CD4-positive, alpha-beta memory T cell (primary cell): ENCODE measurements at regions of chr16 and their contacts with region 1.

Region 1: GRCh38 chr16:8878521-8878911 is 3.6 kb upstream of the LITAFD start:
- DNase-seq: no peak
- H3K4me3 ChIP-seq: no peak overlapping the region
- H3K4me3 Mint-ChIP-seq: no peak overlapping the region
- H3K27ac ChIP-seq: no peak overlapping the region
- H3K27ac Mint-ChIP-seq: no peak overlapping the region
- H3K4me1 ChIP-seq: peaks cover 3% of the 10 kb centered on the region
- H3K4me1 Mint-ChIP-seq: peaks cover 3 to 20% (median 10%) of the 10 kb centered on the region in 4 donors
- H3K27me3 ChIP-seq: no peaks in the 10 kb centered on the region
- H3K27me3 Mint-ChIP-seq: no peaks in the 10 kb centered on the region

Region 2: DNA sequence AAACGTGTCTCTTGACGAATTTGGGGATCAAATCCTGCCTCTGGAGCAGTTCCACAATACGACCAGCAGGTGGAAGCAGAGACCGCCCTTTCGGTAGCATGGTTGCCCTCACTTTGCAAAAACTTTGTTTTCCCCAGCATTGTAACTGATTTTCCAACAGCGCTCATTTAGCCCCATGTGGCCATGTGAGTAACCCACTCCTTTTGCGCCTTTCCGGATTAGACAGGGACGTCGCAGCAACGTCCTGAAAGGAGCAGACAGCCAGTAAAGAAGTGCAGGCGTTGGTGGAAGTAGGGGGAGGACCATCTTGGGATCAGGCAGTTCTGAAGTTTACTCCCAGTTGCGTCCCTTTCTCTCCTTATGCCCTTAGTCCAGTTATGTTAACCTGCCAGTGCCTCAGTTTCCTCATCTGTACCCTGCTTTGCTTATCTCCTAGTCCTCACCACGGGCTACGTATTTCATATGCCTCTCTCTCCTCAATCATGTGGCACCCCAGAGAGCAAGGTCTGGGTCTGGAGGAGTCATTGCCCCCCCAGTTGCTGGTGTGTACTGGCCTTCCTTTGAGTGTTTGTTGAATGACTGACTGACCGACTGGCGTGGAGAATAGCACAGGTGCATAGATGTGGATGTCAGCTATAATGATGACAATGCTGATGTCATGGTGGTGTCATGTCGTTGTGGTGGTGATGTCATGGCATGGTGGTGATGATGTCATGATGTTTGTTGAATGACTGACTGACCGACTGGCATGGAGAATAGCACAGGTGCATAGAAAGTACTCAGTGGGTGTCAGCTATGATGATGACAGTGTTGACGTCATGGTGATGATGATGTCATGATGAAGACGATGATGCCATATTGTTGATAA is 310.5 kb before region 1 on chr16:
- CTCF ChIA-PET with region 1: interaction called, 47 read pairs
- POLR2A ChIA-PET with region 1: no interaction called
- intact Hi-C with region 1: loop called (anchors 1 kb)
- DNase-seq: peak; percentile 71 to 82 (median 80)
- H3K4me3 ChIP-seq: no peak overlapping the region
- H3K4me3 Mint-ChIP-seq: peak overlapping the region in 4 of 8 donors; percentile 14 to 41 (median 28)
- H3K27ac ChIP-seq: no peak overlapping the region
- H3K27ac Mint-ChIP-seq: peak overlapping the region in 5 of 7 donors; percentile 48 to 83 (median 62)
- H3K4me1 ChIP-seq: no peaks in the 10 kb centered on the region
- H3K4me1 Mint-ChIP-seq: peaks cover 4 to 10% (median 7%) of the 10 kb centered on the region in 4 donors
- H3K27me3 ChIP-seq: no peaks in the 10 kb centered on the region
- H3K27me3 Mint-ChIP-seq: peaks cover 0 to 16% of the 10 kb centered on the region in 2 donors

Region 3: GRCh38 chr16:8682566-8683259 is 195.8 kb before region 1 on chr16:
- CTCF ChIA-PET with region 1: no interaction called
- POLR2A ChIA-PET with region 1: no interaction called
- intact Hi-C with region 1: no loop called
- DNase-seq: no peak
- H3K4me3 ChIP-seq: no peak overlapping the region
- H3K4me3 Mint-ChIP-seq: no peak overlapping the region
- H3K27ac ChIP-seq: no peak overlapping the region
- H3K27ac Mint-ChIP-seq: no peak overlapping the region
- H3K4me1 ChIP-seq: no peaks in the 10 kb centered on the region
- H3K4me1 Mint-ChIP-seq: peaks cover 0 to 5% (median 4%) of the 10 kb centered on the region in 4 donors
- H3K27me3 ChIP-seq: no peaks in the 10 kb centered on the region
- H3K27me3 Mint-ChIP-seq: no peaks in the 10 kb centered on the region

Region 4: GRCh38 chr16:8797364-8798173 is 80.9 kb before region 1 on chr16 and contains the starts of genes PMM2 and TMEM186:
- CTCF ChIA-PET with region 1: interaction called, 11 read pairs
- POLR2A ChIA-PET with region 1: interaction called, 5 read pairs
- intact Hi-C with region 1: no loop called
- DNase-seq: peak; percentile 93 to 97 (median 94)
- H3K4me3 ChIP-seq: peak within 1 kb of the TSS; percentile 73 to 97
- H3K4me3 Mint-ChIP-seq: peak within 1 kb of the TSS; percentile 93 to 98 (median 95)
- H3K27ac ChIP-seq: peak within 1 kb of the TSS; percentile 81
- H3K27ac Mint-ChIP-seq: peak within 1 kb of the TSS; percentile 88 to 97 (median 94)
- H3K4me1 ChIP-seq: peaks cover 44% of the 10 kb centered on the region
- H3K4me1 Mint-ChIP-seq: peaks cover 24 to 55% (median 33%) of the 10 kb centered on the region in 4 donors
- H3K27me3 ChIP-seq: no peaks in the 10 kb centered on the region
- H3K27me3 Mint-ChIP-seq: no peaks in the 10 kb centered on the region
- total RNA-seq, gene PMM2: 51.7 to 61.7 TPM
- total RNA-seq, gene TMEM186: 15.6 to 17.9 TPM

Region 5: GRCh38 chr16:8850279-8850885 is 28.1 kb before region 1 on chr16:
- CTCF ChIA-PET with region 1: interaction called, 10 read pairs
- POLR2A ChIA-PET with region 1: interaction called, 4 read pairs
- intact Hi-C with region 1: no loop called
- DNase-seq: no peak
- H3K4me3 ChIP-seq: no peak overlapping the region
- H3K4me3 Mint-ChIP-seq: peak overlapping the region in 1 of 8 donors; percentile 20
- H3K27ac ChIP-seq: no peak overlapping the region
- H3K27ac Mint-ChIP-seq: peak overlapping the region; percentile 22 to 94 (median 84)
- H3K4me1 ChIP-seq: peaks cover 11% of the 10 kb centered on the region
- H3K4me1 Mint-ChIP-seq: peaks cover 17 to 37% (median 25%) of the 10 kb centered on the region in 4 donors
- H3K27me3 ChIP-seq: no peaks in the 10 kb centered on the region
- H3K27me3 Mint-ChIP-seq: no peaks in the 10 kb centered on the region

Region 6: DNA sequence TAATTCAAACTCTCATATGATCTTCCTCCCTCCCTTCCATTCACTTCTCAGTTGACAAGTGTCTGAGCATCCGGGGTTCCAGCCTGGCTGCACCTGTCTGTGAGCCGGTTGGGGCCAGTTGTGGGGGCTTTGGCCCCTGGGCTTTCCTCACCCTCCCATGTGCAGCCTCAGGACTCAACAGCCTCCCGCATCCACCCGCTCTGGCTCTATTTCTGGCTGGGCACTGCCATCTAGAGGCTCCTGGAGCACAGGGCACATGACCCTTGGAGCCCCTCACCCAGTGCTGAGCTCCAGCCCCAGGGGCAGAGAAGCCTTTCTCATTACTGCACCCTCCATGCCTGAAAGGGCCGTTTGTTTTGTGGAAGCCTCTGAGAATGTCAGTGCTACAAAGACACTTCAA is 256.2 kb after region 1 on chr16:
- CTCF ChIA-PET with region 1: interaction called, 3 read pairs
- POLR2A ChIA-PET with region 1: no interaction called
- intact Hi-C with region 1: loop called (anchors 2 kb)
- DNase-seq: peak in 4 of 5 donors; percentile 38 to 46 (median 46)
- H3K4me3 ChIP-seq: no peak overlapping the region
- H3K4me3 Mint-ChIP-seq: peak overlapping the region in 1 of 8 donors; percentile 62
- H3K27ac ChIP-seq: no peak overlapping the region
- H3K27ac Mint-ChIP-seq: peak overlapping the region in 4 of 7 donors; percentile 39 to 82 (median 55)
- H3K4me1 ChIP-seq: peaks cover 18% of the 10 kb centered on the region
- H3K4me1 Mint-ChIP-seq: peaks cover 9 to 26% (median 19%) of the 10 kb centered on the region in 4 donors
- H3K27me3 ChIP-seq: no peaks in the 10 kb centered on the region
- H3K27me3 Mint-ChIP-seq: peaks cover 0 to 2% of the 10 kb centered on the region in 2 donors